CD14-positive monocyte (primary cell): ENCODE measurements at regions of chr3 and their contacts with region 1.

Region 1: DNA sequence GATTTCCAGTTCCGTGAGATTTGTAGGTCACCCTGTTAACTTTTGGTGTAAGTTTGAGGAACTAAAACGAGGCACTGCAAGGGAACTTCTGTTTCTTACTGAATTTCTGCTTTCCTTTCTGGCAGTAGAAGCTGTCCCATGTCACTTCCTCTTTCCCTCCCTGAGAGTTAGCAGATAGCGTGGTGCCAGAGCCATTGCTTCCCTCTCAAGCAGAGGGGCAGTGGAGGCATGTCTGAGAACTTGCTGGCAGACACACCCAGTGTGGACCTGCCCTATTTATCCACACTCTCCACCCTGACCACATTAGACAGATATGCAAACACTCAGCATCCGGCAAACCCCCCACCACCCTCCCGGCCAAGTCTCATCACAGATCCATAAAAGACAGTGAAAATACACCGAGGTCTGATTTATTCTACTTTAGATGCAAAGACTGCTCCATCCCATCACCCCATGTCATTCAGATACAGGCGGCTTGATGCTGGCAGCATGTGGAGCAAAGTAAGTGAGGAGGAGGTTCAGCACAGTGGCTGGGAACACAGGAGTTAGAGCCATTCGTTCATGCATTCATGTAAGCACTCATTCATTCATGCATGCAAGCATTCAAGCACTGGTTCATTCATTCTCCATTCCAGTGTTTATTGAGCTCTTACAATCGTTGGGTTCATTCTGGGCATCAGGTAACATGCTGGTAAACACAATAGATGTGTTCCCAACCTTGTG is 324.7 kb downstream of the SHQ1 start:
- DNase-seq: peak; percentile 93 to 98 (median 96)
- H3K4me3 ChIP-seq: peak overlapping the region in 1 of 3 experiments; percentile 41
- H3K4me3 Mint-ChIP-seq: peak overlapping the region; percentile 51 to 84
- H3K27ac ChIP-seq: peak overlapping the region; percentile 97 to 98
- H3K27ac Mint-ChIP-seq: peak overlapping the region; percentile 89 to 97 (median 94)
- H3K4me1 ChIP-seq: peaks cover 41 to 47% of the 10 kb centered on the region in 2 donors
- H3K4me1 Mint-ChIP-seq: peaks cover 35% of the 10 kb centered on the region
- H3K27me3 ChIP-seq: no peaks in the 10 kb centered on the region
- H3K27me3 Mint-ChIP-seq: no peaks in the 10 kb centered on the region
- CTCF ChIP-seq: no peak

Region 2: GRCh38 chr3:72458358-72458757 is 65.2 kb before region 1 on chr3:
- intact Hi-C with region 1: loop called (anchors 5 to 10 kb)
- DNase-seq: no peak
- H3K4me3 ChIP-seq: no peak overlapping the region
- H3K4me3 Mint-ChIP-seq: no peak overlapping the region
- H3K27ac ChIP-seq: no peak overlapping the region
- H3K27ac Mint-ChIP-seq: no peak overlapping the region
- H3K4me1 ChIP-seq: peaks cover 8 to 16% of the 10 kb centered on the region in 2 donors
- H3K4me1 Mint-ChIP-seq: peaks cover 16% of the 10 kb centered on the region
- H3K27me3 ChIP-seq: no peaks in the 10 kb centered on the region
- H3K27me3 Mint-ChIP-seq: peaks cover 0 to 3% (median 1%) of the 10 kb centered on the region in 3 donors
- CTCF ChIP-seq: no peak

Region 3: GRCh38 chr3:72694398-72694797 is 170.8 kb after region 1 on chr3:
- intact Hi-C with region 1: no loop called
- DNase-seq: no peak
- H3K4me3 ChIP-seq: no peak overlapping the region
- H3K4me3 Mint-ChIP-seq: no peak overlapping the region
- H3K27ac ChIP-seq: no peak overlapping the region
- H3K27ac Mint-ChIP-seq: peak overlapping the region in 1 of 7 donors; percentile 51
- H3K4me1 ChIP-seq: no peaks in the 10 kb centered on the region
- H3K4me1 Mint-ChIP-seq: peaks cover 3% of the 10 kb centered on the region
- H3K27me3 ChIP-seq: no peaks in the 10 kb centered on the region
- H3K27me3 Mint-ChIP-seq: peaks cover 1 to 5% (median 3%) of the 10 kb centered on the region in 3 donors
- CTCF ChIP-seq: no peak

Region 4: GRCh38 chr3:73179601-73180000 is 656.0 kb after region 1 on chr3:
- intact Hi-C with region 1: no loop called
- DNase-seq: no peak
- H3K4me3 ChIP-seq: no peak overlapping the region
- H3K4me3 Mint-ChIP-seq: no peak overlapping the region
- H3K27ac ChIP-seq: no peak overlapping the region
- H3K27ac Mint-ChIP-seq: no peak overlapping the region
- H3K4me1 ChIP-seq: no peaks in the 10 kb centered on the region
- H3K4me1 Mint-ChIP-seq: no peaks in the 10 kb centered on the region
- H3K27me3 ChIP-seq: no peaks in the 10 kb centered on the region
- H3K27me3 Mint-ChIP-seq: peaks cover 4 to 6% (median 5%) of the 10 kb centered on the region in 3 donors
- CTCF ChIP-seq: no peak